HEK293T (cell line): ENCODE measurements at regions of chr20 and their contacts with region 1.

Region 1: DNA sequence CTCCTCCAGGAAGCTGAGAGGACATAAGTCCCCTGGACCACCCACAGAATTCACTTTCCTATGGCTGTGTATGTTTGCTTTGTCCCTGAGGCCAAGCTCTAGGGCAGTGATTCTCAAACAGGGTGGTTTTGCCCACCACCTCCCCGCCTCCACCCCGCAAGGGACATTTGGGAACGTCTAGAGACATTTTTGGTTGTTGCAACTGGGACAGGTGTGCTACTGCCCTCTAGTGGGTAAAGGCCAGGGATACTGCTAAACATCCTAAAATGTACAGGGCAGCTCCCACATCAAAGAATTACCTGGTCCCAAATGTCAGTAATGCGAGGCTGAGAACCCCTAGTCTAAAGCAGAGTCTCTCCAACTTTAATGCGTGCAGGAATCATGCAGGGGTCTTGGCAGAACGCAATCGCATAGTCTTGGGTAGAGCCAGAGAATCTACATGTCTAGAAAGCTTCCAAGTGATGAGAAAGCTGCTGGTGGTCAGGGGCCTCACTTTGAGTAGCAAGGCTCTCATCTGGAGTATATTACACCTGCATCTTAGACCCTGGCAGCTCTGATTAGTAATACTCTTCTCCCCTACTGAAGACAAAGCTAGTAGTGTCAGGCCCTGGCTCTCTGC is 5.1 kb downstream of the KCNS1 start:
- DNase-seq: peak; percentile 66

Region 2: DNA sequence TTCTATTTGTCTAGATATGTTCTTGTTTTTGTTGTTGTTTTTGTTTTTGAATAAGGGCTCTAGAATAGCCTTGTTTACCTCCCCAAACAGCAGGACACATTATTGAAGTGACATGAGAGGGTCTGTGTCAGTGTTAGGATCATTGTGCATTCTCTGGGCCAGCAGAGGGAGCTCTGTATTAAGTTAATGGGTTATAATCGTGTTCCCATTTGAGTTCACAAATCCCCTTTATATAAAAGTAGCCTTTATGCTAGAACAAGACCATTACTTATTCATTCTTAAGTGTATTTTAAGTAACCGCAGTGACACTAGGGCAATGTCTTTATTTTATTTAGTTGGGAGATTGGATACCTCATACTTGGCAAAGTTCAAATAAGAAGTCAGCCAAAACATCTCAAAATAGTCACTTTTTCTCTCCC is 84.7 kb before region 1 on chr20:
- CTCF ChIA-PET with region 1: interaction called, 16 read pairs
- POLR2A ChIA-PET with region 1: no interaction called
- DNase-seq: peak; percentile 44

Region 3: DNA sequence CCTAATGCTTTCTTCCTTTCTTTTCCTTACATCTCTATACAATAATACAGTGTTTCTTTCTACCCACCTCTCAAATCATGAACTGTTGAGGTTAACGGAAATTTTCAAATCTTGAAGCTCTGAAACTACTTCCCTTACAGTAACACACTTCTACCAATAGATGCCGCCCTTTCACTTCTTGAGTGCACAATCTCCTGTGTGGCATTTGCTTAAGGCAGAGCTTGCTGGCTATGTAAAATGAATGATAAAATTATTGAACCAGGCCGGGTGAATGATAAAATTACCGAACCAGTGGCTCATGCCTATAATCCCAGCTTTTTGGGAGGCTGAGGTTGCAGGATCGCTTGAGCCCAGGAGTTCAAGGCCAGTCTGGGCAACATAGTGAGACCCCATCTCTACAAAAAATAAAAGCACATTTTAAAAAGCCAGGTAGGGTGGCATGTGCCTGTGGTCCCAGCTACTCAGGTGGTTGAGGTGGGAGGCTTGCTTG is 51.7 kb before region 1 on chr20:
- CTCF ChIA-PET with region 1: interaction called, 41 read pairs
- POLR2A ChIA-PET with region 1: no interaction called
- DNase-seq: peak; percentile 63

Region 4: DNA sequence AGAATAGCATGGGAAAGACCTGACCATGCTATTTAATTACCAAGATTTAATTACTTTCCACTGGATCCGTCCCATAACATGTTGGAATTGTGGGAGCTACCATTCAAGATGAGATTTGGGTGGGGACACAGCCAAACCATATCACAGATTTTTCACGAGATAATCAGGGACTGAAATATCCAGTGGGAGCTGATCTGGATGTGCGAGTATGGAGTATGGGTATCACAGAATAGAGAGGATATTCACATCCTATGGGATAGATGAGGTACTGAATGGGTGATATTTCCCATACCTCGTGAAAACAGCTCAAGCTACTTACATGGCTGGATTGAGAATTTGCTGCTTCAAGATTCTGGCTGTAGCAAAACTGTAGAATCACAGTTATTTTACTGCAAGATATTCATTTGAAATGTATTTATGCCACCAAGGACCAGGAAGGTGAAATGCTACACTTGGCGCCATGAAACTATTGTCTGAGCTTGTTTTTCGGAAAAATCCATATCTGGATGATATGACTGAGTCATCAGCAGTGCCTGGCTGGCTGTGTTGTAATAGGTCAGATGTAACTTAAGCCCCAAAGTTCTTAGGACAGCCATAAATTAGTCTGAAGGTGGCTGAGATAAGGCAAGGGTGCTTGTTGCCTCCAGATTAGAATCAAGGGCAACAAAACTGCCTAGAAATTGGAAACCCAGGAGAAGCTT is 24.8 kb before region 1 on chr20:
- CTCF ChIA-PET with region 1: interaction called, 12 read pairs
- POLR2A ChIA-PET with region 1: interaction called, 3 read pairs
- DNase-seq: peak; percentile 38

Region 5: DNA sequence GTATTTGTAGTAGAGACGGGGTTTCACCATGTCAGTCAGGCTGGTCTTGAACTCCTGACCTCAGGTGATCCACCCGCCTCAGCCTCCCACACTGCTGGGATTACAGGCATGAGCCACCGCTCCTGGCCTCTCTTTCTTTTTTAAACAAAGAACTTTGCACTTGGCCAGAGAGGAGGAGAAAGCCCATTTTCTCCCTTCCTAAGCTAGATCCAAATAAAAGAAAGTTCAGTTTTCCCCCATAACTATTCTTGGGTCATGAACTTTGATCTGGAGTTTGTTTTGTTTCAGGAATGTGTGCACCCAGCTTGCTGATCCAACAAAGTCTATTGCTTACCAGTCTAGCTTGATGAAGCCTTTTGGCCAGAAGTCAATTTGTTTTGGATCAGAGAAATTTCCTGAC is 18.3 kb before region 1 on chr20:
- CTCF ChIA-PET with region 1: interaction called, 12 read pairs
- POLR2A ChIA-PET with region 1: no interaction called
- DNase-seq: no peak

Region 6: GRCh38 chr20:45111799-45112471 is 16.1 kb after region 1 on chr20:
- CTCF ChIA-PET with region 1: interaction called, 24 read pairs
- POLR2A ChIA-PET with region 1: interaction called, 3 read pairs
- DNase-seq: peak; percentile 45

Region 7: DNA sequence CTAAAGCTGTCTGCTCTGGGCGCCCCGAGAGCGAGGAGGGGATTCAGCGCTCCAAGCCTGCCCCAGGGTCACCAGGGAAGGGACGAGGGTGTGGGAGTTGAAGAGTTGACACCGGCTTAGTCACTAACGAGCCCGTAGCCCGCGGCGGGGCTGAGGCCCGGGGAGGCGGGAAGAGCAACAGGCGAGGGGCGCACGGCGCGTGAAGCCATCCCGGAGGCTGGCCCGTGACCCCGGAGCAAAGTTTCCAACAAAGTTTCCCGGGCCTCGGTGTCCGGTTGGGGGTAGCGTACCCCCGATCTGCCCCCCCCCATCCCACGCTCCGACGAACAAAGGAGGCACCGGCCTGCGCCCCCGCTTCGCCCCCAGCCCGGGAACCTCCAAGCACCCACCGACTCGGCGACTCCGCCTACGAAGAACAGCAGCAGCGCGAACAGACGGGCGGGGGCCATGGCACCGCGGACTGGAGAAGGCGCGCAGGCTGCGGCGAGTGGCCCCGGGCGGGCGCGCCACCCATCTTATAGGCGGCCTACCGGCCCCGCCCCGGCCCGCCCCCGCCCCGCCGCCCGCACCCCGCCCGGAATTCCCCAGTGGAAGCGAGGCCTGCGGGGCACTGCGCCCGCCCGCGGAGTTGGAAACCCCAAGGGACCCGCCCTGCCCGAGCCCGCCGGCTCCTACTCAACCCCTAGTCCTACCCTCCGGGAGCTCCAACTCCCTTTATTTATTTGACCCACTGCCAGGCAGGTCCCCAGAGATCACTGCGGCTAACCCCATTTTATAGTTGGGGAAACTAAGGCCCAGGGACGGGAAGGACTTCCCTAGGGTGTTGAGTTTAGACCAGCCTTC is 252.3 kb after region 1 on chr20 and contains the start of gene SDC4:
- CTCF ChIA-PET with region 1: no interaction called
- POLR2A ChIA-PET with region 1: no interaction called
- DNase-seq: peak; percentile 69